A549 (cell line): ENCODE measurements at regions of chr17 and their contacts with region 1.

Region 1: DNA sequence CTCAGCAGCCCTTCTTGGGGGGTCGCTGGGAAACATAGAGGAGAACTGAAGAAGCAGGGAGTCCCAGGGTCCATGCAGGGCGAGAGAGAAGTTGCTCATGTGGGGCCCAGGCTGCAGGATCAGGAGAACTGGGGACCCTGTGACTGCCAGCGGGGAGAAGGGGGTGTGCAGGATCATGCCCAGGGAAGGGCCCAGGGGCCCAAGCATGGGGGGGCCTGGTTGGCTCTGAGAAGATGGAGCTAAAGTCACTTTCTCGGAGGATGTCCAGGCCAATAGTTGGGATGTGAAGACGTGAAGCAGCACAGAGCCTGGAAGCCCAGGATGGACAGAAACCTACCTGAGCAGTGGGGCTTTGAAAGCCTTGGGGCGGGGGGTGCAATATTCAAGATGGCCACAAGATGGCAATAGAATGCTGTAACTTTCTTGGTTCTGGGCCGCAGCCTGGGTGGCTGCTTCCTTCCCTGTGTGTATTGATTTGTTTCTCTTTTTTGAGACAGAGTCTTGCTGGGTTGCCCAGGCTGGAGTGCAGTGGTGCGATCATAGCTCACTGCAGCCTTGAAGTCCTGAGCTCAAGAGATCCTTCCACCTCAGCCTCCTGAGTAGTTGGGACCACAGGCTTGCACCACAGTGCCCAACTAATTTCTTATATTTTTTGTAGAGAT is 3.4 kb downstream of the STH start:
- DNase-seq: peak; percentile 69 to 78
- ATAC-seq: peak; percentile 89 to 91
- H3K4me3 ChIP-seq: no peak overlapping the region
- H3K27ac ChIP-seq: peak overlapping the region in 1 of 2 experiments; percentile 61; a peak in 3 of 6 replicates
- H3K4me1 ChIP-seq: peaks cover 15% of the 10 kb centered on the region
- CTCF ChIP-seq: peak; percentile 93
- EP300 ChIP-seq: no peak
- POLR2A ChIP-seq: no peak
- RAD21 ChIP-seq: peak; percentile 96 to 97

Region 2: GRCh38 chr17:45894022-45894784 is 108.2 kb before region 1 on chr17 and contains the start of gene MAPT:
- CTCF ChIA-PET with region 1: no interaction called
- POLR2A ChIA-PET with region 1: no interaction called
- DNase-seq: peak; percentile 93 to 97
- ATAC-seq: peak; percentile 75 to 93
- H3K4me3 ChIP-seq: peak within 1 kb of the TSS; percentile 69
- H3K27ac ChIP-seq: peak within 1 kb of the TSS; percentile 76 to 85
- H3K4me1 ChIP-seq: peaks cover 22% of the 10 kb centered on the region
- CTCF ChIP-seq: peak; percentile 99
- EP300 ChIP-seq: no peak
- POLR2A ChIP-seq: peak; percentile 92
- RAD21 ChIP-seq: peak; percentile 15 to 54; a peak in 4 of 5 replicates
- polyA plus RNA-seq, gene MAPT: 1.1 and 1.2 TPM in 2 replicates

Region 3: DNA sequence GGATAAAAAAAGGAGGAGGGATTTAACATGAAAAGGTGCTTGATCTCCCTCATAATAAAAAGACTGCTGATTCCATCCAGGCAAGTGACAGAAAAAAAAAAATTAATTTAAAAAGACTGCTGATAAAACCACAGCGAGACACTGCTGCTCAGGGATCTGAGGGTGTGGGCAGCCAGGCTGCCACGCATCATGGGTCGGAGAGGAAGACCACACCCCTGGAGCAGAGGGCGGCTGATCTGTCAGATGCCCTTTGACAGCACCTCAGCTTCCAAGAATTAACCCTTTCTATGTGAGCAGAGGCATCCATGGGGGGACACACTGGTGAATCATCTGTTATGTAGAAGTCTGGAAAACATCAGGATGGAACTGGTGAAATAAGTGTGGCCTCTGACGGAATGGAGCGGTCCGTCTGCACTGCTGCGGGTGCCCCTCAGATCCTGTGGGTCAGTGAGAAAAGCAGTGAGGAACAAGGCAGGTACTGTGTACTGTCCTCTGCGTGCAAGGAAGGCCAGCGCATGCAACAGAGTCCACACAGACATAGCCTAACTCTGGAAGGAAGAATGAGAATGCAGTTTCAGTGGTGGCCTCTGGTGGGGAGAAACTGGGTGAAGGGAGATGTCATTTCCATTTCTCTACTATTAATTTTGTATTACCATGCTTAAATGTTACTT is 88.3 kb before region 1 on chr17:
- CTCF ChIA-PET with region 1: no interaction called
- POLR2A ChIA-PET with region 1: no interaction called
- DNase-seq: no peak
- ATAC-seq: peak; percentile 53 to 59; a peak in 2 of 6 replicates
- H3K4me3 ChIP-seq: no peak overlapping the region
- H3K27ac ChIP-seq: no peak overlapping the region
- H3K4me1 ChIP-seq: no peaks in the 10 kb centered on the region
- CTCF ChIP-seq: no peak
- EP300 ChIP-seq: no peak
- POLR2A ChIP-seq: no peak
- RAD21 ChIP-seq: no peak

Region 4: DNA sequence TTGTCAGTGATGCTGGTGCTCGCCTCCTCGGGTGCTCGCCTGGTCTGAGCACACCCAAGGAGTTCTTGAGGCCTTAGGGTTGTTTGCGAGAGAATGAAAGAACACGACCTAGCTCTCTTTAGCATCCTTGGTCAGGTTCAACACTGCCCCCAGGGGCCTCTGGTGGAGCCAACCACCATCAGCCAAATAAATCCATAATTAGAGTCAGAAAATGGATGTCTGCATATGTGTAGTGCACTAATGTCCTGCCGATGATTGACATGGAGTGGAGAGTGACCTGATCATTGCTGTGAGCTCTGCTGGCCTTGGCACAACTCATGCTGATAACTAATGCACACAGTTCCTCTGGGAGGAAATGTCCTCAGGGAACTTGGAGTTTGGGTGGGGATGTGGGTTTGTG is 11.6 kb before region 1 on chr17:
- CTCF ChIA-PET with region 1: interaction called, 34 read pairs
- POLR2A ChIA-PET with region 1: no interaction called
- DNase-seq: no peak
- ATAC-seq: peak in 1 of 2 experiments; percentile 50; a peak in 3 of 6 replicates
- H3K4me3 ChIP-seq: no peak overlapping the region
- H3K27ac ChIP-seq: no peak overlapping the region
- H3K4me1 ChIP-seq: no peaks in the 10 kb centered on the region
- CTCF ChIP-seq: no peak
- EP300 ChIP-seq: no peak
- POLR2A ChIP-seq: no peak
- RAD21 ChIP-seq: no peak

Region 5: GRCh38 chr17:46026166-46027047 is 24.0 kb after region 1 on chr17:
- CTCF ChIA-PET with region 1: interaction called, 127 read pairs
- POLR2A ChIA-PET with region 1: no interaction called
- DNase-seq: no peak
- ATAC-seq: peak; percentile 14 to 21; a peak in 3 of 6 replicates
- H3K4me3 ChIP-seq: no peak overlapping the region
- H3K27ac ChIP-seq: no peak overlapping the region
- H3K4me1 ChIP-seq: no peaks in the 10 kb centered on the region
- CTCF ChIP-seq: no peak
- EP300 ChIP-seq: no peak
- POLR2A ChIP-seq: no peak
- RAD21 ChIP-seq: no peak

Region 6: GRCh38 chr17:46061435-46061834 is 59.0 kb after region 1 on chr17:
- CTCF ChIA-PET with region 1: interaction called, 16 read pairs
- POLR2A ChIA-PET with region 1: no interaction called
- DNase-seq: peak; percentile 42 to 49
- ATAC-seq: peak in 1 of 2 experiments; percentile 52; a peak in 3 of 6 replicates
- H3K4me3 ChIP-seq: no peak overlapping the region
- H3K27ac ChIP-seq: no peak overlapping the region
- H3K4me1 ChIP-seq: peaks cover 86% of the 10 kb centered on the region
- CTCF ChIP-seq: peak; percentile 46; the same call in 2 of the 3 replicates
- EP300 ChIP-seq: no peak
- POLR2A ChIP-seq: no peak
- RAD21 ChIP-seq: peak in 1 of 2 experiments; percentile 55; a peak in 4 of 5 replicates

Region 7: DNA sequence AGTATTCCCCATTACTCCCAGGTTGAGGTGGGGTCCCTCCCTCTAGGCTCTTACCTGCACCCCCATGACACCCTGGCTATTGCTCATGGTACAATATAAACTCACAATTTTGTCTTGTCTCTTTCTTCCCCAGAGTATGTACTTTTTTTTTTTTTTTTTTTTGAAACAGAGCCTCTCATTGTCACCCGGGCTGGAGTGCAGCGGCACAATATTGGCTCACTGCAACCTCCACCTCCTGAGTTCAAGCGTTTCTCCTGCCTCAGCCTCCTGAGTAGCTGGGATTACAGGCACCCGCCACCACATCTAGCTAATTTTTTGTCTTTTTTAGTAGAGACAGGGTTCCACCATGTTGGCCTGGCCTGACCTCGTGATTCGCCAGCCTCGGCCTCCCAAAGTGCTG is 182.3 kb after region 1 on chr17:
- CTCF ChIA-PET with region 1: interaction called, 21 read pairs
- POLR2A ChIA-PET with region 1: no interaction called
- DNase-seq: no peak
- ATAC-seq: no peak
- H3K4me3 ChIP-seq: no peak overlapping the region
- H3K27ac ChIP-seq: no peak overlapping the region
- H3K4me1 ChIP-seq: peaks cover 65% of the 10 kb centered on the region
- CTCF ChIP-seq: no peak
- EP300 ChIP-seq: no peak
- POLR2A ChIP-seq: no peak
- RAD21 ChIP-seq: no peak

Region 8: GRCh38 chr17:46212634-46213435 is 210.4 kb after region 1 on chr17:
- CTCF ChIA-PET with region 1: interaction called, 186 read pairs
- POLR2A ChIA-PET with region 1: no interaction called
- DNase-seq: peak; percentile 88 to 95
- ATAC-seq: peak; percentile 91 to 92
- H3K4me3 ChIP-seq: no peak overlapping the region
- H3K27ac ChIP-seq: no peak overlapping the region
- H3K4me1 ChIP-seq: no peaks in the 10 kb centered on the region
- CTCF ChIP-seq: peak; percentile 99
- EP300 ChIP-seq: no peak
- POLR2A ChIP-seq: no peak
- RAD21 ChIP-seq: peak; percentile 91